Prostate gland (tissue), 2 donors: ENCODE measurements at regions of chr9 and their contacts with region 1.

Region 1: GRCh38 chr9:19925817-19926503 is 137.1 kb upstream of the SLC24A2 start:
- DNase-seq: peak; percentile 67
- H3K4me3 ChIP-seq: peak overlapping the region; percentile 23 to 27
- H3K27ac ChIP-seq: peak overlapping the region in 1 of 2 donors; percentile 26
- H3K4me1 ChIP-seq: no peaks in the 10 kb centered on the region
- H3K27me3 ChIP-seq: no peaks in the 10 kb centered on the region
- CTCF ChIP-seq: peak; percentile 88 to 94 (median 92)
- POLR2A ChIP-seq: no peak

Region 2: DNA sequence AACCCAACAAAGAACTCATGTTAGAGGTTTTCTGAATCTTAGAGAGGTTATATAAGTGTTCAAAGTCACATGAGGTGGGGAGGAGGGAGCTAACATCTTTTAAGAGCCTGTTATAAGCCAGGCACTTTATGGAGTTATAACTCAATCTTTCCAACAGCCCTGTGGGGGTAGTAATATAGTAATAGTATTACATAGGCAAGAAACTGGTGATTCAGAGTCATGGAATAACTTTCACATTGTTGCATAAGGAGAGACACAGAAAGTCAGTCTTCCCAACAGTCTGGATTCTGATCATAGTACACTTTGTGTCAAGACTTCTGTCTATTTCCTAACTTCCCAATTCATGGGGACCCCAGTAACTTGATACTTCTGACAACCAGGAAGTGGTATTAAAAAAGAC is 427.9 kb before region 1 on chr9:
- intact Hi-C with region 1: loop called (anchors 5 kb)
- DNase-seq: no peak
- H3K4me3 ChIP-seq: no peak overlapping the region
- H3K27ac ChIP-seq: no peak overlapping the region
- H3K4me1 ChIP-seq: no peaks in the 10 kb centered on the region
- H3K27me3 ChIP-seq: no peaks in the 10 kb centered on the region
- CTCF ChIP-seq: no peak
- POLR2A ChIP-seq: no peak

Region 3: DNA sequence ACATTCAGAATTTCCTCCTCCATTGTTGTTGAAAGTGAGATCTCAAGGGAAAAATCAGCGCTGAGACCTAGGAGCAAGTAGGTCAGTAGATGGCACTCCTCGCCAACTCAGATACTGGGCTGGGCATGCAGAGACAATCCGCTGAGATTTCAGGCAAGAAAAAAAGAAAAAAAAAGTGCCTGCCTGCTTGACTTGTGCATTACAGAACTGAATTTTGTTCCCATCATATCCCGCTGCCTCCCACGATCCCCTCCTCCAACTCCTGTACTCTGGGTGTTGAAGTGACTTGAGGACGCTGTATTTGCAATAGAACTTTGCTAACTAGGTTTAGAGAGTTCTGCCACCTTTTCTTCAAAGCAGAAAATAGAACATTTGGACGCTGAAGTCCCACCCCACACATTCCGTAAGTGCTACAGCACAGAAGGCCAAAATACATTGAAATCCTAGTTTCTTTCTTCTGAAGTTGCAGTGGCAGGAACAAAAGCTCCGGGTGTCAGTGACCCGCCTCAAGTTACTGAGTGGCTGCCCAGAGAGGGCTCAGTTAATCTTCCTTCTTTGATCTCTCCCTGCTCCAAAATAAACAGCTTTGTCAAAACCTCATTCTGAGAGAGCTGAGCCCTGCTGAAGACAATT is 430.6 kb after region 1 on chr9:
- intact Hi-C with region 1: loop called (anchors 10 kb)
- DNase-seq: peak; percentile 78
- H3K4me3 ChIP-seq: peak overlapping the region in 1 of 2 donors; percentile 14
- H3K27ac ChIP-seq: peak overlapping the region; percentile 38 to 59
- H3K4me1 ChIP-seq: peaks cover 4% of the 10 kb centered on the region
- H3K27me3 ChIP-seq: no peaks in the 10 kb centered on the region
- CTCF ChIP-seq: peak in 3 of 4 experiments; percentile 60 to 71 (median 64)
- POLR2A ChIP-seq: no peak

Region 4: DNA sequence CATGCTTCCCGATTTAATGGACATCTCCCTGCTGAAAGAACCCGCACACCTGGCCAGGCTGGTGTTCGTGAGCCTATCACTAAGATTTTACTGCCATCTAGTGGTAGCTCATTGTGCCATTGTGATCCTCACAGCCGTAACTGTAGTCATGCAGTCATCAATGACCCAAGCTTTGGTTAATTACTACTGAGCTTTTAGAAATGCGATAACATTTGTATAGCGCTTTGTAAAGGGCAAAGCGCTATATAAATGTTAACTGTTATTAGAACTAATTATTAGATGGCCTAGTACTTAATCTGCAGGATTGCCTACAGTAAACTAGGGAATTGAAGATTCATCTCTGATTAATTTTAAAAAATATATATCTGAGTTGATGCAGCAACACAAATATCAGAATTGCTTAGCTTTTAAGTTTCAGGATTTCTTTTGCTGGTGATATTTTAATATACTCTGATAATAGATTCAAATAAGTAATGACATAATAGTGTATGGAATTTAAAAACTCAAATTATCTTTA is 1015.3 kb after region 1 on chr9:
- intact Hi-C with region 1: loop called (anchors 5 kb)
- DNase-seq: peak; percentile 67
- H3K4me3 ChIP-seq: no peak overlapping the region
- H3K27ac ChIP-seq: no peak overlapping the region
- H3K4me1 ChIP-seq: no peaks in the 10 kb centered on the region
- H3K27me3 ChIP-seq: no peaks in the 10 kb centered on the region
- CTCF ChIP-seq: peak; percentile 56 to 81 (median 80)
- POLR2A ChIP-seq: no peak

Region 5: GRCh38 chr9:21110708-21111576 is 1185.0 kb after region 1 on chr9:
- intact Hi-C with region 1: loop called (anchors 2 kb)
- DNase-seq: peak; percentile 25
- H3K4me3 ChIP-seq: no peak overlapping the region
- H3K27ac ChIP-seq: no peak overlapping the region
- H3K4me1 ChIP-seq: no peaks in the 10 kb centered on the region
- H3K27me3 ChIP-seq: no peaks in the 10 kb centered on the region
- CTCF ChIP-seq: peak; percentile 57 to 79 (median 74)
- POLR2A ChIP-seq: no peak